Activated CD4-positive, alpha-beta T cell treated with anti-CD3 and anti-CD28 coated beads for 36 hours (primary cell): ENCODE measurements at regions of chr7 and their contacts with region 1.

Region 1: DNA sequence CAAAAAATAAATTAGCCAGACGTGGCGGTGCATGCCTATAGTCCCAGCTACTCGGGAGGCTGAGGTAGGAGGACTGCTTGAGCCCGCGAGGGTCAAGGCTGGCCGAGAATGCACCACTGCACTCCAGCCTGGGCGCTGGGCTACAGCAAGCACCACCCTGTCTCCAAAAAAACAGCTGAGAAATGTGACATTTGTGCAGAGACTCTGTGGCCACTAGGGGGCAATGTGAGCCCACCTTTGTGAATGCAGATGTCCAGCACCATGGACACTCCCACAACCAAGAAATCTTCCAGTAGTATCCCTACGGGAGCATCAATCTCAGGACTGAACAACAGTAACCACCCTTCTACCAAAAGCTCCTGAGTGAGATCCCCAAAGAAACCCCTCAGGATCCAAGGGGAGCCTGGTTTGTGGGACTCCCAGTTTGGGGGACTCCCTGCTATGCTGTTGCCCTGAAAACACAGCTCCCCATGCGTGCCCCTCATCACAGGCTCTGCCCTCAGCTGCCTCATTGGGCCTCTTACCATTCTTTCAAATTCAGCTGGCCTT is 6.2 kb upstream of the AHCYL2 start:
- DNase-seq: peak; percentile 87
- ATAC-seq: peak; percentile 88
- H3K4me3 Mint-ChIP-seq: no peak overlapping the region
- H3K27ac Mint-ChIP-seq: peak overlapping the region; percentile 55
- H3K4me1 Mint-ChIP-seq: peaks cover 13% of the 10 kb centered on the region
- H3K27me3 Mint-ChIP-seq: no peaks in the 10 kb centered on the region

Region 2: GRCh38 chr7:128742206-128742605 is 476.4 kb before region 1 on chr7:
- CTCF ChIA-PET with region 1: no interaction called
- POLR2A ChIA-PET with region 1: no interaction called
- intact Hi-C with region 1: no loop called
- DNase-seq: no peak
- ATAC-seq: no peak
- H3K4me3 Mint-ChIP-seq: no peak overlapping the region
- H3K27ac Mint-ChIP-seq: no peak overlapping the region
- H3K4me1 Mint-ChIP-seq: peaks cover 46% of the 10 kb centered on the region
- H3K27me3 Mint-ChIP-seq: no peaks in the 10 kb centered on the region

Region 3: DNA sequence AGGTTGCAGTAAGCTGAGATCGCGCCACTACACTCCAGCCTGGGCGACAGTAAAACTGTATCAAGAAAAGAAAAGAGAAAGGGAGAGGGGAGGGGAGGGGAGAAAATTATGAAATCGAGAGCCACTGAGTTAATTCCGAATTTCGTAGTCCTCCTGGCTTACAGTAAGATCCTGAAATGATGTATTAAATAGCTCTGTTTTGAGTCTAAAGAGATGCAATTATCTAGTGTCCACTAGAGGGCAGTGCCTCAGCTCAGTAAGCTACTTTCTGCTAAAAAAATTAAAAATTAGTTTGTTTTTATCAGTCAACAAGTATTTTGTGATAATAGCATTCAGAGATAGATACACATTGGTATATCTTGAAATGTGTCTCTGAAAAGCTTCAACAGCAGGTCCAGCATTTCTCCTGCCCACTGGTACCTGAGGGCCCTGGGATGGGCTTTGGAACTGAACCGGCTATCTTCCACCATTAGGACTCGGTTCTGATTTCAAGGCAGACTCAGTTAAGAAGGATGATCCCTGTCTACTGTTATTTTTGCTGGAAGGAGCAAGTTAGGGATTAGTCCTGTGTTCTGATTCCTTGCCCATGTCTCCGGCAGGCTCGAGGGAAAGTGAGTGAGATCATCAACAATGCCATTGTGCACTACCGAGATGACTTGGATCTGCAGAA is 54.6 kb before region 1 on chr7:
- CTCF ChIA-PET with region 1: interaction called, 20 read pairs
- POLR2A ChIA-PET with region 1: interaction called, 3 read pairs
- intact Hi-C with region 1: no loop called
- DNase-seq: no peak
- ATAC-seq: peak; percentile 72
- H3K4me3 Mint-ChIP-seq: no peak overlapping the region
- H3K27ac Mint-ChIP-seq: no peak overlapping the region
- H3K4me1 Mint-ChIP-seq: peaks cover 6% of the 10 kb centered on the region
- H3K27me3 Mint-ChIP-seq: peaks cover 2% of the 10 kb centered on the region

Region 4: GRCh38 chr7:129231666-129232065 is 13.1 kb after region 1 on chr7:
- CTCF ChIA-PET with region 1: interaction called, 31 read pairs
- POLR2A ChIA-PET with region 1: no interaction called
- intact Hi-C with region 1: no loop called
- DNase-seq: no peak
- ATAC-seq: no peak
- H3K4me3 Mint-ChIP-seq: no peak overlapping the region
- H3K27ac Mint-ChIP-seq: no peak overlapping the region
- H3K4me1 Mint-ChIP-seq: peaks cover 2% of the 10 kb centered on the region
- H3K27me3 Mint-ChIP-seq: no peaks in the 10 kb centered on the region

Region 5: DNA sequence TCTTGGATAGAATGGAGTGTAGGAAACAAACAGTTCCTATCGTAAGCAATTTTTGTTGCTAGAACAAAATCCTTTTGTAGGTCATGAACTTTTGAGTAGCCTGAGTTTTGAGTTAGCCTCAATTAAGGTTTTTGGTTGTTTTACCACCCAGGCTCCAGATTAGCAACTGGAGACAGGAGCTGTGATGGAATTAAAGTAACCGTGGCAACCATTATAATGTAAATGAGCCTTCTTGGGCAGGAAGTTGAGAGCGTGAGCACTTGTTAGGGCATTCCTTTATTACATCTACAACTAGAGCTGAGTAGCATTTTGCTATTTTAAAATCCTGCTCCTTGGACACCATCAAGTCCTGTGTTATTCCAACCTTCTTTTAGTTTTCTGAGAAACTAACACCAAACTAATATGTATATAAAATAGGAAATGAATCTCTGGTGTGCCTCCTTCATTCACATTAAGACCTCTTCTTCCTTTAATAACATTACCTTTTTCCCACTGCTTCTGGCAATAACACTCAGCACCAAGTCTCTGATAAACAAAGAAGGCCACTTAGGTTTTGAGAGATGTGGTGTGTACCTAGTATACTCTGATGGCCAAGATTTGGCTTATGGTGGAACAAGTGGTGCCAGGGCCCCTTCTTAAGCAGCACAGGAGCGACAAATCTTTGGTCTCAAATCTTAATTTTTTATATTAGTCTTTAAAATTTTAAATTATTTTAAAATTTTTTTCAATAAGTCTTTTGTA is 40.2 kb after region 1 on chr7:
- CTCF ChIA-PET with region 1: interaction called, 39 read pairs
- POLR2A ChIA-PET with region 1: no interaction called
- intact Hi-C with region 1: no loop called
- DNase-seq: no peak
- ATAC-seq: peak; percentile 51
- H3K4me3 Mint-ChIP-seq: no peak overlapping the region
- H3K27ac Mint-ChIP-seq: no peak overlapping the region
- H3K4me1 Mint-ChIP-seq: peaks cover 30% of the 10 kb centered on the region
- H3K27me3 Mint-ChIP-seq: no peaks in the 10 kb centered on the region

Region 6: DNA sequence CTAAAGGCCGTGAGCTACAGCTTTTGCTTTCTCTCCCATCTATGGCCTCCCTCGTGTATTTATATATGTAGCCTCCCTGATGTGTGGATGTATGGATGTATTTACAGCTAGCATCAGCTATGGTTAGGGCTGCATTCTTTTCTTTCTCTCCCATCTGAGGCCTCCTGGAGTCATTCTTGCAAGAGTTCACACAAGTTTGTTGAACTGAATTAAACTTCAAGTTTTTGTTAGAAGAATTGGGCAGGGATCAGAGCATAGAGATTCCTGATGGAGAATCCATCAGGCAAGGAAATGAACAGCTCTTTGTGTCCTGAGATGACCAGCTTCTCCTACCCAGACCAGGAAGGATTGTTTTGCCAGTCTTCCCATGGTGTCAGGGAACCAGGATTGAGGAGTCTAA is 66.5 kb after region 1 on chr7:
- CTCF ChIA-PET with region 1: interaction called, 28 read pairs
- POLR2A ChIA-PET with region 1: no interaction called
- intact Hi-C with region 1: no loop called
- DNase-seq: no peak
- ATAC-seq: no peak
- H3K4me3 Mint-ChIP-seq: no peak overlapping the region
- H3K27ac Mint-ChIP-seq: no peak overlapping the region
- H3K4me1 Mint-ChIP-seq: no peaks in the 10 kb centered on the region
- H3K27me3 Mint-ChIP-seq: no peaks in the 10 kb centered on the region

Region 7: DNA sequence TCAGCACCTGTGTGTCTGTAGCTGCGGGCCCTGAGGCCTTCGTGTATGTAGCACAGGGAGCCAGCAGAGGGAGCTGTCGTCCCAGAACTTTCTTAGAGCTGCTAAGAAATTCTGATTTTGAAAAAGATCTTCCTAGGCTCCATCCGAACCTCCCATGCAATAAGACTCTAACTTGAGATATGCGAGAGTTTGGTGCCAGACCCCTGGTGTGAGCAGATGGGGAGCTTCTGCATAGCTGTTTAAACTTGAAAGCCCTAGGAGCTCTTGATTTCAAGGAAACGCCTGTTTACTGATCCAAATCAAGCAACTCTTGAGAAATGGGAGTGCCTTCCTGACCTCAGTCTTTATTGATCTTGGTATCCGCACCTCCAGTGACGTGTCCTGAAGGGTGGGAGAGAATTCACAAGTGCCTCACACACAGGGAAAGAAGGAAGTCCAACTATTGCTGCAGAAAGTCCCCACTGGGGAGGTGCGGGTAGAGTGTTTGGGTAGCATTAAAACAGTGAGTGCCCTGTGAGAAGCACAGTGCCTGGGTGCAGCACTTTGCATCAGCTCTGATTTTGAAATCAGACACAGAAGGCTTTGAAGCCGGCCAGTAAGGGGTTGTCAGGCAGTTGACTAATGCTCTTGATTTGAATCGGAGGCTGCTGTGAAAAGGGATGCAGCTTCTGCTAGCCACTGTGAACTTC is 149.3 kb after region 1 on chr7:
- CTCF ChIA-PET with region 1: interaction called, 11 read pairs
- POLR2A ChIA-PET with region 1: no interaction called
- intact Hi-C with region 1: no loop called
- DNase-seq: peak; percentile 92
- ATAC-seq: peak; percentile 89
- H3K4me3 Mint-ChIP-seq: peak overlapping the region; percentile 57
- H3K27ac Mint-ChIP-seq: peak overlapping the region; percentile 95
- H3K4me1 Mint-ChIP-seq: peaks cover 38% of the 10 kb centered on the region
- H3K27me3 Mint-ChIP-seq: no peaks in the 10 kb centered on the region